Testis (tissue), 5 donors: ENCODE measurements at regions of chr6 and their contacts with region 1.

Region 1: DNA sequence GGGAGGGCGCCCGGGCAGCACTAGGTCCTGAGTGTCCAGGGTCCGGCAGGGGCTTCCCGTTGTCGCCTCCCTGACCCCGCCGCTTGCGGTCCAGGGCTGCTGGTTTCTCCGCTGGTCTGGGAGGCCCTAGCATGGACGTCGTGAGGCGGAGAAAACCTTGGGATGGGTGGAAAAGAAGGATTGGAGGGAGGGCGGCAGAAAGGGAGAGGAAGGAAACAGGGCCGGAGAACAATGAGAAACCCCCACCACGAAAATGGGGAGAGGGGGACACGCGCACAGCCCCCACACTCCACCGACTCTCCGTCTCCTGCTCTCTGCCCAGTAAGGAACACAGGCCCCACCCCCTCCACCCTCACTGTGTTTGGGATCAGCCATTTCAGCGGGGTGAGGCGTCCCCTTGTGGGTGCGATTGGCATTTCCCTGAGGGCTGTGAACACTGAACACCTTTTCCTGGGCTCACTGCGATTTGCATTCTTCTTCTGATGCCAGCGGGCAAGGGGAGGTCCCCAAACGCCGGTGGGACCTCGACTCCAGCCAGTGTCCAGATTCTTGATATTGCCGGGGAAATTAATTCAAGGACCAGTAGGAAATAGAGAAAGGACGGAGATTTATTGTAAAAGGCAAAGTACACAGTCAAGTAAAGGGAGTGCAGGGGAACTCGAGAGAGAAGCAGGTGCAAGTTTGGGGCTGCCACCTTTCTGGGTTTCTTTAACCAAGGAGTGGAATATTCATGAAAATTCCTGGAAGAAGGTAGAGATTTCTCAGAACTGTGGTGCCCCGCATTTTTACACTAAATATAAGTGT is 3.3 kb upstream of the RAET1G start:
- DNase-seq: peak; percentile 96
- H3K4me3 ChIP-seq: peak overlapping the region; percentile 50 to 56
- H3K27ac ChIP-seq: peak overlapping the region in 1 of 2 donors; percentile 61
- H3K4me1 ChIP-seq: peaks cover 9% of the 10 kb centered on the region
- H3K27me3 ChIP-seq: no peaks in the 10 kb centered on the region
- CTCF ChIP-seq: peak; percentile 87 to 98 (median 94)
- POLR2A ChIP-seq: no peak

Region 2: GRCh38 chr6:149615805-149616204 is 310.4 kb before region 1 on chr6:
- intact Hi-C with region 1: no loop called
- DNase-seq: no peak
- H3K4me3 ChIP-seq: no peak overlapping the region
- H3K27ac ChIP-seq: no peak overlapping the region
- H3K4me1 ChIP-seq: peaks cover 3% of the 10 kb centered on the region
- H3K27me3 ChIP-seq: no peaks in the 10 kb centered on the region
- CTCF ChIP-seq: no peak
- POLR2A ChIP-seq: no peak

Region 3: DNA sequence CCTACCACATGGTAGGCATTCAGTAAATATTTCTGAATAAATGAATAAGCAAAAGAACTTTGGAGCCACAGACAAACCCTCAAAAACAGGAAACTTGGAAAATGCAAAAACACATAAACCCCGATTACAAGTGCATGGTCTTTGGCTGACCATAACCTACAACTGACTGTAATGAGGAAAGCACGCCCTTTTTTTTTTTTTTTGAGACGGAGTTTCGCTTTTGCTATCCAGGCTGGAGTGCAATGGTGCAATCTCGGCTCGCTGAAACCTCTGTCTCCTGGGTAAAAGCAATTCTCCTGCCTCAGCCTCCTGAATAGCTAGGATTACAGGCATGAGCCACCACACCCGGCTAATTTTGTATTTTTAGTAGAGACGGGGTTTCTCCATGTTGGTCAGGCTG is 196.4 kb before region 1 on chr6:
- intact Hi-C with region 1: loop called (anchors 10 kb)
- DNase-seq: no peak
- H3K4me3 ChIP-seq: no peak overlapping the region
- H3K27ac ChIP-seq: no peak overlapping the region
- H3K4me1 ChIP-seq: no peaks in the 10 kb centered on the region
- H3K27me3 ChIP-seq: no peaks in the 10 kb centered on the region
- CTCF ChIP-seq: no peak
- POLR2A ChIP-seq: no peak

Region 4: DNA sequence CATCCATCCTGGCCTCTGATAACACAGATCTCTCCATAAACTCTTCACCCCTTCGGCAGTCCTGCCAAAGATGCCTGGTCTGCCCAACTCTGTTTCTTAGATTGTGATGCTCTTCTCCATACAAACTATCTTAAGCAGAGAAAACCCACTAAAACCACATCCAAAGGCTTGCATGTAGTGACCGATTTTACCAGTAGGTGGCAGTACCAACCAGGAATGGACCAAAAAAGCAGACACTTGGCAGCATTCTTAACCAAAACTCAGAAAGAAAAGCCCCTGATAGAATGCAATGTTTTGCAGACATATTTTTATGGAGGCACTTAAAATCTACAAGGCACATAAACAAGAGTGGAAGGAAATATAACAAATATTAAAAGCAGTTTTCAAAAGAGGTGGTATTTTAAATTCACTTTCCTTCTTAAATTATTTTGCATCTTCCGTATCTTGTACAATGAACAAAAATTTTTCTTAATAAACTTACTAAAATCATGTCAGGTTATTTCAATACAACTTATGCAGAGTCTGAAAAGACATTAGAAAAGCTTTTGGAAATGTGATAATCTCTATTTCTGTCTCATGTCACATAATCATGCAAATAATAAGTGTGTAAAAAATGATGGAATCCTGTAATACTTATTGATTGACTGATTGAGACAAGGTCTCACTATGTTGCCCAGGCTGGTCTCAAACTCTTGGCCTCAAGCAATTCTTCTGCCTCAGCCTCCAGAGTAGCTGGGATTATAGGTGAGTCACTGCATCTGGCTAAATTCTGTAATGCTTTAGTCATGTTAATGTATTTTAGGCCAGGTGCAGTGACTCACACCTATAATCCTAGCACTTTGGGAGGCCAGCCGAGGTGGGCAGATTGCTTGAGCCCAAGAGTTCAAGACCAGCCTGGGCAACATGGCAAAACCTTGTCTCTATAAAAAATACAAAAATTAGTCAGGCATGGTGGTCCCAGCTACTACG is 91.4 kb before region 1 on chr6:
- intact Hi-C with region 1: loop called (anchors 5 kb)
- DNase-seq: peak; percentile 83
- H3K4me3 ChIP-seq: no peak overlapping the region
- H3K27ac ChIP-seq: no peak overlapping the region
- H3K4me1 ChIP-seq: no peaks in the 10 kb centered on the region
- H3K27me3 ChIP-seq: no peaks in the 10 kb centered on the region
- CTCF ChIP-seq: peak; percentile 88 to 94 (median 88)
- POLR2A ChIP-seq: no peak